B cell (primary cell): ENCODE measurements at regions of chr18 and their contacts with region 1.

Region 1: DNA sequence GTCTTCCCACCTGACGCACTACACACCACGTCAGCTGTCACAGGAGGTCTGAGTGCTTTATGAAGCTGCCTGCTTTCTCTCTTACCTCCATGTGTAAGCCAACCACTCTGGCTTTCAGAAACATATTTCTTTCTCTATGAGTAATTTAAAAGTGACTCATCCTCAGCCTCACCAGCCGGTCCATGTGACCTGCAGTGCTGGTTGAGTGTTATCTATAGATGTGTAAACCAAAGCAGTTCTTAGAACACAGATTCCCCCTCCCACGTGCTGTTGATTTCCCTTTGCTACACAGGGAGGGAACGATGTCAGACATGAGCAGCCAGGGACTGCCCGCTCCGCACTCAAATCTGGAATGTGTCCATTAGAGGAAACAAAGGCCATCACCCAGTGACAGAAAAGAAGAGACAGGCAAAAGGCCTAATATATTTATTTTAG is 157.8 kb downstream of the BCL2 start:
- DNase-seq: peak; percentile 80
- ATAC-seq: peak; percentile 56
- H3K4me3 ChIP-seq: peak overlapping the region in 1 of 5 experiments; percentile 43
- H3K4me3 Mint-ChIP-seq: peak overlapping the region; percentile 79
- H3K27ac ChIP-seq: peak overlapping the region; percentile 89 to 97
- H3K27ac Mint-ChIP-seq: peak overlapping the region; percentile 96
- H3K4me1 ChIP-seq: peaks cover 77 to 79% of the 10 kb centered on the region in 2 donors
- H3K4me1 Mint-ChIP-seq: peaks cover 88% of the 10 kb centered on the region
- H3K27me3 ChIP-seq: no peaks in the 10 kb centered on the region
- H3K27me3 Mint-ChIP-seq: no peaks in the 10 kb centered on the region
- CTCF ChIP-seq: no peak

Region 2: GRCh38 chr18:62898359-62898758 is 263.4 kb before region 1 on chr18:
- CTCF ChIA-PET with region 1: no interaction called
- POLR2A ChIA-PET with region 1: no interaction called
- intact Hi-C with region 1: no loop called
- DNase-seq: no peak
- ATAC-seq: no peak
- H3K4me3 ChIP-seq: no peak overlapping the region
- H3K4me3 Mint-ChIP-seq: no peak overlapping the region
- H3K27ac ChIP-seq: no peak overlapping the region
- H3K27ac Mint-ChIP-seq: no peak overlapping the region
- H3K4me1 ChIP-seq: no peaks in the 10 kb centered on the region
- H3K4me1 Mint-ChIP-seq: no peaks in the 10 kb centered on the region
- H3K27me3 ChIP-seq: no peaks in the 10 kb centered on the region
- H3K27me3 Mint-ChIP-seq: no peaks in the 10 kb centered on the region
- CTCF ChIP-seq: no peak

Region 3: GRCh38 chr18:63131106-63131958 is 30.4 kb before region 1 on chr18:
- CTCF ChIA-PET with region 1: interaction called, 160 read pairs
- POLR2A ChIA-PET with region 1: interaction called, 4 read pairs
- intact Hi-C with region 1: no loop called
- DNase-seq: peak; percentile 79
- ATAC-seq: peak; percentile 69
- H3K4me3 ChIP-seq: no peak overlapping the region
- H3K4me3 Mint-ChIP-seq: no peak overlapping the region
- H3K27ac ChIP-seq: peak overlapping the region in 1 of 2 donors; percentile 22
- H3K27ac Mint-ChIP-seq: peak overlapping the region; percentile 86
- H3K4me1 ChIP-seq: peaks cover 4 to 8% of the 10 kb centered on the region in 2 donors
- H3K4me1 Mint-ChIP-seq: peaks cover 30% of the 10 kb centered on the region
- H3K27me3 ChIP-seq: no peaks in the 10 kb centered on the region
- H3K27me3 Mint-ChIP-seq: no peaks in the 10 kb centered on the region
- CTCF ChIP-seq: peak; percentile 80

Region 4: DNA sequence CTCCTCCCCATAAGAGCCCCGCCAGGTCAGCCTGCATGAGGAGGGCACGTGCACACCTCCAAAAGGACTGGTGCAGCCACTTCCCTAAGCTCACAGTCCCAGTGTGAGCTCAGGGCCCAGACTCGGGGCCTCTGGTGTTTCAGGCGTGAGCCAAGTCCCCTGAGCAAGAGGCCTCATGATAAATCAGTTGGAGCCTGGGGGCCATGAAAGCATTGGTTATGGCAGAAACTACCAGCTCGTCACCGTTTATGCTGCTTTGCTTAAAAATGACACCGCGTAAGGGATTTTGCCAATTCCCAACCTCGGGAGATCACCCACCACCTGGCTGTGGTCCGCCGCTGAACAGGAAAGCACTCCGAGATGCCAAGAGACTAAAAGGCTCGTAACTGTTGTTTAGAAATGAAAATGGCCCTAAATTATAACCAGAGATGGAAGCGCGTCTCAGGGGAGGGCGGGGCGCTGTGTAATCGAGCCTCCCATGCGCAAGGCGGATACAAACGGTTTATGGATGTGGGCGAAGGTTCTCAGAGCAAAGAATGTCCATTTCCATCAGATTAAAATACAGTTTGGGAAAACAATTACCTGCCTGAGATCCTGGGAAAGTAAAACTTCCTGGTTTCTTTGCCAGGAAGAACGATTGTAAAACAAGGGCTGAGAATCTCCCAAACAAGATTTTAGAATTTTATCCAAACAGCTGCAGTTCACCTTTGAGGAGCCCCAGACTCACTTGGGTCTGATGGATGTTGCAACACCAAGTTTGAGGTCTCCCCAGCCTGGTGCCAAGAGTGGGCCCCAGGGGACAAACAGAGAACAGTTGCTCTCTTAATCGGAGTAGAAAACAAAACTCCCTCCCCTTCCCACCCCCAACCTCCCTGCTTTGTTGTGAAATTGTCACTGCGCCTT is 16.4 kb after region 1 on chr18:
- CTCF ChIA-PET with region 1: interaction called, 12 read pairs
- POLR2A ChIA-PET with region 1: interaction called, 4 read pairs
- intact Hi-C with region 1: loop called (anchors 2 kb)
- DNase-seq: no peak
- ATAC-seq: no peak
- H3K4me3 ChIP-seq: no peak overlapping the region
- H3K4me3 Mint-ChIP-seq: no peak overlapping the region
- H3K27ac ChIP-seq: no peak overlapping the region
- H3K27ac Mint-ChIP-seq: peak overlapping the region; percentile 76
- H3K4me1 ChIP-seq: peaks cover 63 to 73% of the 10 kb centered on the region in 2 donors
- H3K4me1 Mint-ChIP-seq: peaks cover 89% of the 10 kb centered on the region
- H3K27me3 ChIP-seq: no peaks in the 10 kb centered on the region
- H3K27me3 Mint-ChIP-seq: no peaks in the 10 kb centered on the region
- CTCF ChIP-seq: no peak

Region 5: GRCh38 chr18:63216516-63217311 is 54.9 kb after region 1 on chr18:
- CTCF ChIA-PET with region 1: interaction called, 3 read pairs
- POLR2A ChIA-PET with region 1: no interaction called
- intact Hi-C with region 1: loop called (anchors 2 kb)
- DNase-seq: no peak
- ATAC-seq: no peak
- H3K4me3 ChIP-seq: no peak overlapping the region
- H3K4me3 Mint-ChIP-seq: peak overlapping the region; percentile 16
- H3K27ac ChIP-seq: peak overlapping the region in 1 of 2 donors; percentile 44
- H3K27ac Mint-ChIP-seq: peak overlapping the region; percentile 70
- H3K4me1 ChIP-seq: peaks cover 20 to 27% of the 10 kb centered on the region in 2 donors
- H3K4me1 Mint-ChIP-seq: peaks cover 67% of the 10 kb centered on the region
- H3K27me3 ChIP-seq: no peaks in the 10 kb centered on the region
- H3K27me3 Mint-ChIP-seq: no peaks in the 10 kb centered on the region
- CTCF ChIP-seq: no peak

Region 6: GRCh38 chr18:63292831-63293683 is 131.3 kb after region 1 on chr18:
- CTCF ChIA-PET with region 1: interaction called, 15 read pairs
- POLR2A ChIA-PET with region 1: interaction called, 15 read pairs
- intact Hi-C with region 1: loop called (anchors 1 kb)
- DNase-seq: peak; percentile 81
- ATAC-seq: peak; percentile 80
- H3K4me3 ChIP-seq: peak overlapping the region in 4 of 5 experiments; percentile 18 to 60 (median 46)
- H3K4me3 Mint-ChIP-seq: peak overlapping the region; percentile 79
- H3K27ac ChIP-seq: peak overlapping the region; percentile 94 to 95
- H3K27ac Mint-ChIP-seq: no peak overlapping the region
- H3K4me1 ChIP-seq: peaks cover 74 to 75% of the 10 kb centered on the region in 2 donors
- H3K4me1 Mint-ChIP-seq: peaks cover 62% of the 10 kb centered on the region
- H3K27me3 ChIP-seq: no peaks in the 10 kb centered on the region
- H3K27me3 Mint-ChIP-seq: no peaks in the 10 kb centered on the region
- CTCF ChIP-seq: no peak

Region 7: DNA sequence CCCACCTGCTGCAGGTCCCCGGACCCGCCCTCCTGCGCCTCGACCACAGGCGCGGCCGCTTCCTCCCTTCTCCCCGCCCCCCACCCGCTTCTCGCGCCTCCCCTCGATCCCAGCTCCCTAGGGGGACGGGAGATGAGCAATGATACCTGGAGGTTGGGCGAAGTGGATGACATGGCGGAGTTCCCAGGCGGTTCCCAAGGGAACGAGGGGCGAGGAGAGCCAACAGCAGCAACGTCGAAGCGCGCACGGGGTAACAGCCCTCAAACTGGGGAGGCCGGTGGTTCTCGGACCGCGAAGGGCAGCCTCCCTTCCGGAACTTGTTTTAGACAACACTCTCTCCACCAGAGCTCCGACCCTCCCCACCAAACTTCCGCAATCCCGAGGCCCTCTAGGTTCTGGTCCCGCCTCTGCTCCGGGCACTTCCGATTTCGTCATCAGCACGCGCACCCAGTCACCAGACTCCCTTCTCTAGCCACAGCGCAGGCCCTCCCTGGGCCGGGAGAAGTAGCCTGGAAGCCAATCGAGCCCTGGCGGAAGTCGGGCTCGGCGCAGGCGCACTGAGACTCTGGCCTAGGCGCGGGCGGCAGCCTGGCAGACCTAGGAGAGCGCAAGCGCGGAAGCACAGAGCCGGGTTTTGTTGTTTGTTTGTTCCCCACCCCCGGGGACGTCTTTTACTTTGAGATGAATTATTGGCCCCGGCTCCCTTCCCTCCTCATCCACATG is 260.5 kb after region 1 on chr18 and contains the start of gene VPS4B:
- CTCF ChIA-PET with region 1: no interaction called
- POLR2A ChIA-PET with region 1: no interaction called
- intact Hi-C with region 1: loop called (anchors 5 kb)
- DNase-seq: peak; percentile 100
- ATAC-seq: peak; percentile 96
- H3K4me3 ChIP-seq: peak within 1 kb of the TSS; percentile 73 to 99 (median 82)
- H3K4me3 Mint-ChIP-seq: peak within 1 kb of the TSS; percentile 99
- H3K27ac ChIP-seq: peak within 1 kb of the TSS; percentile 93 to 99
- H3K27ac Mint-ChIP-seq: peak within 1 kb of the TSS; percentile 96
- H3K4me1 ChIP-seq: peaks cover 18 to 21% of the 10 kb centered on the region in 2 donors
- H3K4me1 Mint-ChIP-seq: peaks cover 35% of the 10 kb centered on the region
- H3K27me3 ChIP-seq: no peaks in the 10 kb centered on the region
- H3K27me3 Mint-ChIP-seq: peaks cover 9% of the 10 kb centered on the region
- CTCF ChIP-seq: peak; percentile 0
- total RNA-seq, gene VPS4B: 91.5 and 93.9 TPM in 2 replicates